Left ventricle myocardium inferior (tissue), 1 donor: ENCODE measurements at regions of chr6 and their contacts with region 1.

Region 1: DNA sequence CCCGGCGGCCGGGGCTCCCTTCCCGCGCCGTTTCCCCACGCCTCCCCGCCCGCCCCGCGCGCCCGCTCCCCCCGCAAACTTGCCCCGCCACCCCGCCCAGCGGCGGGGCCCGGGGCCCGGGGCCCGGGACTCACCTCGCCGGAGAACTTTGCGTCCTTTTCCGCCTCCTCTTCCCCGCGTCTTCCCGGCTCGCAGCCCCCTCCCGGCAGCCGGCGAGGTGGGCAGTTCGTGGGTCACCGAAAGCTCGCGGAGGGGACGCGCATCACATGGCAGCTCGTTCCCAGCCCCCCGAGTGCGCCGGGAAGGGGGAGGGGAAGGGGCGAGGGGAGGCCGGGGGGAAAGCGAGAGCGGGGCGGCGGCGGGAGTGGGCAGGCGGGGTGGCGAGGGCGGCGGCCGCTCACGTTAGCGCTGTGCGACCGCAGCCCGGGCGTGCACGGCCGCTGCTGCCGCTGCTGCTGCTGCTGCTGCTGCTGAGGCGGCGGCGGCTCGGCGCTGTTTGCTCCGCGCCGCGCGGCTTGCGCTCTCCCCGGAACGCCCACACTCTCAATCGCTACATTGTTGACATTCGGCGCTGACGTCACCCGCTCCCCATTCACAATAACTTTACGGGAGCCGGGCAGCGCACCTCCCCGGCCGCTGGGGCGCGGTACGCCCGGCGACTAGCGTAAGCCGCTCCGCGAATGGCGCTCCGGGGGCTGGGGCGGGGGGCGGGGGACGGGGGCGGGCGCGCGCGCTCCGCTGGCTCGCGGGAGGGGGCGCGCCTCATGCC is at the start of gene BACH2:
- DNase-seq: peak; percentile 89
- H3K4me3 ChIP-seq: peak within 1 kb of the TSS; percentile 90
- H3K27ac ChIP-seq: peak within 1 kb of the TSS; percentile 88
- H3K4me1 ChIP-seq: peaks cover 39% of the 10 kb centered on the region
- H3K27me3 ChIP-seq: no peaks in the 10 kb centered on the region
- CTCF ChIP-seq: peak; percentile 49
- total RNA-seq, gene BACH2: 1.5 TPM

Region 2: GRCh38 chr6:89970609-89971337 is 325.8 kb before region 1 on chr6:
- intact Hi-C with region 1: loop called (anchors 10 kb)
- DNase-seq: no peak
- H3K4me3 ChIP-seq: no peak overlapping the region
- H3K27ac ChIP-seq: peak overlapping the region; percentile 10
- H3K4me1 ChIP-seq: peaks cover 34% of the 10 kb centered on the region
- H3K27me3 ChIP-seq: no peaks in the 10 kb centered on the region
- CTCF ChIP-seq: peak; percentile 72

Region 3: GRCh38 chr6:90216072-90216977 is 80.2 kb before region 1 on chr6:
- intact Hi-C with region 1: loop called (anchors 10 kb)
- DNase-seq: no peak
- H3K4me3 ChIP-seq: no peak overlapping the region
- H3K27ac ChIP-seq: peak overlapping the region; percentile 31
- H3K4me1 ChIP-seq: peaks cover 49% of the 10 kb centered on the region
- H3K27me3 ChIP-seq: no peaks in the 10 kb centered on the region
- CTCF ChIP-seq: no peak